Dendritic cell treated with granulocyte-macrophage colony-stimulating factor and Interleukin-4, amounts not matched to agents 40 ng/mL and 50 ng/mL, for 4 days (primary cell): ENCODE measurements at regions of chr3 and their contacts with region 1.

Region 1: GRCh38 chr3:112519424-112520001 is 20.2 kb upstream of the BTLA start:
- H3K4me3 Mint-ChIP-seq: no peak overlapping the region
- H3K27ac Mint-ChIP-seq: no peak overlapping the region
- H3K4me1 Mint-ChIP-seq: peaks cover 5% of the 10 kb centered on the region
- H3K27me3 Mint-ChIP-seq: no peaks in the 10 kb centered on the region

Region 2: GRCh38 chr3:112111785-112112402 is 407.6 kb before region 1 on chr3:
- intact Hi-C with region 1: loop called (anchors 5 kb)
- H3K4me3 Mint-ChIP-seq: no peak overlapping the region
- H3K27ac Mint-ChIP-seq: no peak overlapping the region
- H3K4me1 Mint-ChIP-seq: peaks cover 8% of the 10 kb centered on the region
- H3K27me3 Mint-ChIP-seq: peaks cover 14% of the 10 kb centered on the region

Region 3: DNA sequence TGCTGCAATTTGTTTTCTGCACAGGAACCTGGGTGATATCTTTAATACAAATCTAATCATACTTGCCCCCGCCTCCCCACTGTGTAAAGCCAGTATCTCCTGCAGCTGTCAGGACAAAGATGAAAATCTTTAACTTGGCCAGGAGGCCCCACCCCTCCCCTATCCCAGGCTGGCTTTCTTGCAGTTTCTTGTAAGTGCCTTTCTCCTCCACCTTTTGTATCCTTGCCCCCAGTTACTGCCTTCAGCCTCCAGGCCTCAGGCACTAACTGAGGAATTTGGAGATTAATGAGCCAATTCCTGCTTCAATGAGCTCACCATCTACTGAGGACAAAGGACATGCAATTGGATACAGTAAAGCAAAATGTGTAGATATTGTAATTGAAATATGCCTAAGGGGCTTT is 393.0 kb before region 1 on chr3:
- intact Hi-C with region 1: no loop called
- H3K4me3 Mint-ChIP-seq: no peak overlapping the region
- H3K27ac Mint-ChIP-seq: peak overlapping the region; percentile 65
- H3K4me1 Mint-ChIP-seq: peaks cover 20% of the 10 kb centered on the region
- H3K27me3 Mint-ChIP-seq: no peaks in the 10 kb centered on the region

Region 4: DNA sequence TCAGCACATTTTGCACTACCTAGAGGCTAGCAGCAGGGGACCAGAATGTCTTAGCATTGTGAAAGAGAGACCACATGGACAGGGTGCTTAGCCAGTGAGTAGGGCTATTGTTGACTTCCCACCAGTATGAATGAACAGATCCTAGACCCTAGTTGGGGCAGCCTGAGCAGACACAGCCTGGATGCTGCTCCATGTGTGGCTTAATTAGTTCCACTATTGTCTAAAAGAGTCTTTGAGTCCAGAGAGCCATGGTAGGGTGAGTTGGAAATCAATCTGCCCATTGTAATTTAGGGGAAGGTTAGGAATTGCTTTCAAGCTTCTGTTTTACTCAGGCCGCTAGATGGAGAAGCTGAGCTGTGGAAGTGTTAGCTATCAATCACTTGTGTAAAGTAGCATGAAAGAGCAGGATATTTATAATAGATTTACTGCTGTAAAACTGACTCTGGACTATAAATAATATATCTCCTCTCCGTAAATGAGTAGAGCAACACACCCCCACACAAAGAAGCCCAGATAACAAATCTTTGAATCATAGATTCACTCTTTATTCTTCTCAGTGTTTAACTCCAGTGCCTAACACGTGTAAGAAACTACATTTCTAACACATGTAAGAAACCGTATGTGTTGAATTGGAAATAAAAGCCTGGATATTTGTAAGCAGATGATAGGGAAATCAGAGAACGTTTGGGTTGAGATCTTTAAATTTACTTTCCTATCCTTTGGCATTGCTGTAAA is 382.4 kb before region 1 on chr3:
- intact Hi-C with region 1: loop called (anchors 5 kb)
- H3K4me3 Mint-ChIP-seq: no peak overlapping the region
- H3K27ac Mint-ChIP-seq: peak overlapping the region; percentile 43
- H3K4me1 Mint-ChIP-seq: peaks cover 33% of the 10 kb centered on the region
- H3K27me3 Mint-ChIP-seq: no peaks in the 10 kb centered on the region

Region 5: GRCh38 chr3:112293368-112294321 is 225.9 kb before region 1 on chr3 and contains the start of gene SLC9C1:
- intact Hi-C with region 1: loop called (anchors 1 kb)
- H3K4me3 Mint-ChIP-seq: peak within 1 kb of the TSS; percentile 59
- H3K27ac Mint-ChIP-seq: no peak within 1 kb of the TSS
- H3K4me1 Mint-ChIP-seq: peaks cover 19% of the 10 kb centered on the region
- H3K27me3 Mint-ChIP-seq: no peaks in the 10 kb centered on the region

Region 6: GRCh38 chr3:112327371-112327951 is 192.1 kb before region 1 on chr3:
- intact Hi-C with region 1: loop called (anchors 1 kb)
- H3K4me3 Mint-ChIP-seq: no peak overlapping the region
- H3K27ac Mint-ChIP-seq: no peak overlapping the region
- H3K4me1 Mint-ChIP-seq: peaks cover 4% of the 10 kb centered on the region
- H3K27me3 Mint-ChIP-seq: peaks cover 6% of the 10 kb centered on the region